ENCODE measurements at regions of chr6 and their contacts with region 1.

Region 1: GRCh38 chr6:27146706-27147505 is 100.6 kb upstream of the PRSS16 start:
- DNase-seq: peak; percentile 85
- ATAC-seq: peak; percentile 72
- H3K4me3 Mint-ChIP-seq: no peak overlapping the region
- H3K27ac Mint-ChIP-seq: no peak overlapping the region
- H3K4me1 Mint-ChIP-seq: peaks cover 13% of the 10 kb centered on the region
- H3K27me3 Mint-ChIP-seq: no peaks in the 10 kb centered on the region
- CTCF ChIP-seq: no peak

Region 2: DNA sequence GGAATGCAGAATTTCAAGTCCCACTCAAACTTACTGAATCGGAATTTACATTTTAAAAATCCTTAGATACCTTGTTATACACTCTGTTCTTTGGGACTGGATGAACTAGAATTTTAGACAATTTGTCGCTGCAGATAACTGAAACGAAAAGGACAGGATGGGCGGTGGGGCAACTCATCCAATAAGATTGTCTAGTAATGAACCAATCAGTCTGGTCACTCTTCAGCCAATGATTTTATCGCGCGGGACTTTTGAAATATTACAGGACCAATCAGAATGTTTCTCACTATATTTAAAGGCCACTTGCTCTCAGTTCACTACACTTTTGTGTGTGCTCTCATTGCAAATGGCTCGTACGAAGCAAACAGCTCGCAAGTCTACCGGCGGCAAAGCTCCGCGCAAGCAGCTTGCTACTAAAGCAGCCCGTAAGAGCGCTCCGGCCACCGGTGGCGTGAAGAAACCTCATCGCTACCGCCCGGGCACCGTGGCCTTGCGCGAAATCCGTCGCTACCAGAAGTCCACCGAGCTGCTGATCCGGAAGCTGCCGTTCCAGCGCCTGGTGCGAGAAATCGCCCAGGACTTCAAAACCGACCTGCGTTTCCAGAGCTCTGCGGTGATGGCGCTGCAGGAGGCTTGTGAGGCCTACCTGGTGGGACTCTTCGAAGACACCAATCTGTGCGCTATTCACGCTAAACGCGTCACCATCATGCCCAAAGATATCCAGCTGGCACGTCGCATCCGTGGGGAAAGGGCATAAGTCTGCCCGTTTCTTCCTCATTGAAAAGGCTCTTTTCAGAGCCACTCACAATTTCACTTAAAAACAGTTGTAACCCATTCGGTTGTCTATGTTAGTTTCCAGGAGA is 1101.6 kb before region 1 on chr6:
- CTCF ChIA-PET with region 1: no interaction called
- POLR2A ChIA-PET with region 1: interaction called, 10 read pairs
- intact Hi-C with region 1: no loop called
- DNase-seq: peak; percentile 85
- ATAC-seq: peak; percentile 63
- H3K4me3 Mint-ChIP-seq: peak overlapping the region; percentile 76
- H3K27ac Mint-ChIP-seq: peak overlapping the region; percentile 96
- H3K4me1 Mint-ChIP-seq: peaks cover 10% of the 10 kb centered on the region
- H3K27me3 Mint-ChIP-seq: no peaks in the 10 kb centered on the region
- CTCF ChIP-seq: no peak

Region 3: DNA sequence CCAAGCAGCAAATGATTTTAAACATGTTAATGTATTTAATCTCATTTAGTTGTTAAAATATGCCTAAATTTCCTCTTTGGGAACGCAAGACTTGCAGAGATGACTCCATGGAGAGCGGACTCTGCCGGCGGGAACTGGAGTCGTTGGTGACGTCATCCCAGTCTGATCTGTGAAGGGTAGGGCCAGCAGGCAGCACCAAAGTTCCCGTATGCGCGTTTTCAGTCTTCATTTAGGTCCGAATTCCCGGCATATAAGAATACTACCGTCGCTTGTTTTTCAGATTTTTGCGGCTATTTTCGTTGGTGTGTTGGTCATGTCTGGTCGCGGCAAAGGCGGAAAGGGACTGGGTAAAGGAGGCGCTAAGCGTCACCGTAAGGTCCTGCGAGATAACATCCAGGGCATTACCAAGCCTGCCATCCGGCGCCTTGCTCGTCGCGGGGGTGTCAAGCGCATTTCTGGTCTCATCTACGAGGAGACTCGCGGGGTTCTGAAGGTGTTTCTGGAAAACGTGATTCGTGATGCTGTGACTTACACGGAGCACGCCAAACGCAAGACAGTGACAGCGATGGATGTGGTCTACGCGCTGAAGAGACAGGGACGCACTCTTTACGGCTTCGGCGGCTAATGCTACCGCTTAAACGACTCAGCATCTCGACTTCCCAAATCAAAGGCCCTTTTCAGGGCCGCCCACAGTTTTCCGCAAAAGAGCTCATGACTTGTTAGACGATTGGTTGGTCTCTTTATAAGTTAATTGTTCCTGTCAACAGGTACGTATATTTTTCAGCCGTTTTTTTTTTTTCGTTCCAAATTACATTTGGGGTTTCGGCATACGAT is 942.4 kb before region 1 on chr6:
- CTCF ChIA-PET with region 1: no interaction called
- POLR2A ChIA-PET with region 1: interaction called, 34 read pairs
- intact Hi-C with region 1: no loop called
- DNase-seq: peak; percentile 91
- ATAC-seq: peak; percentile 75
- H3K4me3 Mint-ChIP-seq: no peak overlapping the region
- H3K27ac Mint-ChIP-seq: no peak overlapping the region
- H3K4me1 Mint-ChIP-seq: peaks cover 17% of the 10 kb centered on the region
- H3K27me3 Mint-ChIP-seq: no peaks in the 10 kb centered on the region
- CTCF ChIP-seq: no peak

Region 4: DNA sequence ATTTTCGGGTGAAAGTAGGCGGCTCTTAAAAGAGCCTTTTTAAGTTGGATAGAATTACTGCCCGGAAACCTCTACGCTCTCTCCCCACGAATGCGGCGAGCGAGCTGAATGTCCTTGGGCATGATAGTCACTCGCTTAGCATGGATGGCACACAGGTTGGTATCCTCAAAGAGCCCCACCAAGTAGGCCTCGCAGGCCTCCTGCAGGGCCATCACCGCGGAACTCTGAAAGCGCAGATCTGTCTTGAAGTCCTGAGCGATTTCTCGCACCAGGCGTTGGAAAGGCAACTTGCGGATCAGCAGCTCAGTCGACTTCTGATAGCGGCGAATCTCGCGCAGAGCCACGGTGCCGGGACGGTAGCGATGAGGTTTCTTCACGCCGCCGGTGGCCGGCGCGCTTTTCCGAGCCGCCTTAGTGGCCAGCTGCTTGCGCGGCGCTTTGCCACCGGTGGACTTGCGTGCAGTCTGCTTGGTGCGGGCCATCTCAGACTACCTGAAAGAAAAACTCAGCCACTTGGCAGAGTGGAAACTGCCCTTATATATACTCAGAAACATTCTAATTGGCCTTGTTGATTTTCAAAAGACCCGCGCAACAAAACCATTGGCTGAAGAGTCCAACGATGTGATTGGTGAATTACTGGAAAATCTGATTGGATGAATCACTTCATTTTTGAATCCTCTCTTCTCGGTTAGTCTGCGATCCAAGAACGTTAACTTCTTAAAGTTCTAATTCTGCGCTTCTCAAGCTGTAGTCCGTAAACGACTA is 875.8 kb before region 1 on chr6:
- CTCF ChIA-PET with region 1: no interaction called
- POLR2A ChIA-PET with region 1: interaction called, 33 read pairs
- intact Hi-C with region 1: no loop called
- DNase-seq: peak; percentile 87
- ATAC-seq: peak; percentile 43
- H3K4me3 Mint-ChIP-seq: no peak overlapping the region
- H3K27ac Mint-ChIP-seq: no peak overlapping the region
- H3K4me1 Mint-ChIP-seq: peaks cover 18% of the 10 kb centered on the region
- H3K27me3 Mint-ChIP-seq: no peaks in the 10 kb centered on the region
- CTCF ChIP-seq: no peak

Region 5: DNA sequence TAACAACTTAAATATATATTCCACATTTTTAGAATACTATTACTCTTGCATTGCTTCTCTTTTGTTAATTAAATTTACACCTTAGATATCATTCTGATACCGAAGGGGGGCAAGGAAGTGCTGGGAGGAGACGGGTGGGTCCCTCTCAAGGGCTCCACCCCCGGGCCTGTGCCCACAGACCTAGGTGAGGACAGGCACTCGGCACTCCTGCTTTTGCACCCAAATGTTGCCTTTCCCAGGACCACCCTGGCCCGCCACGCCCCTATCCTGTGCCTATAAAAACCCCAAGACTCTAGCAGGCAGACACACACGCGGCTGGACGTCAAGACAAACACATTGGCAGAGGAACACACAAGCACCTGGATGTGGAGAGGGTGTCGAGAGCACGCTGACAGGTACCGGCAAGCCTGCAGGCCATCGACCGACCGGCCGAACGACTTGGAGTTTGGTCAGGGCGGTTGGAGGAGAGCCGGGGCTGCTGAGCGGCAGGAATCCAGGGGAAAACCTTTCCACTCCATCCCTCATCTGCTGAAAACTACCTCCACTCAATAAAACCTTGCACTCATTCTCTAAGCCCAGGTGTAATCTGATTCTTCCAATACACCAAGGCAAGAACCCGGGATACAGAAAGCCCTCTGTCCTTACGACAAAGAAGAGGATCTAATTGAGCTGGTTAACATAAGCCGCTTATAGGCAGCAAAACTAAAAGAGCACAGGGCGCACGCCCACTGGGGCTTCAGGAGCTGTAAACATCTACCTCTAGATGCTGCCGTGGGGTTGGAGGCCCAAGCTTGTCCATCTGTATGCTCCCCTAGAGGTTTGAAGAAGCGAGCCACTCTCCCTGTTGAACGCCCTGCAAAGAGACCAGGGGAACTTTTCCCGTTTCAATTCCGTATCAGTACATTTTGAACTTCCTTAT is 96.8 kb before region 1 on chr6:
- CTCF ChIA-PET with region 1: no interaction called
- POLR2A ChIA-PET with region 1: no interaction called
- intact Hi-C with region 1: no loop called
- DNase-seq: no peak
- ATAC-seq: no peak
- H3K4me3 Mint-ChIP-seq: no peak overlapping the region
- H3K27ac Mint-ChIP-seq: no peak overlapping the region
- H3K4me1 Mint-ChIP-seq: no peaks in the 10 kb centered on the region
- H3K27me3 Mint-ChIP-seq: peaks cover 10% of the 10 kb centered on the region
- CTCF ChIP-seq: no peak

Region 6: DNA sequence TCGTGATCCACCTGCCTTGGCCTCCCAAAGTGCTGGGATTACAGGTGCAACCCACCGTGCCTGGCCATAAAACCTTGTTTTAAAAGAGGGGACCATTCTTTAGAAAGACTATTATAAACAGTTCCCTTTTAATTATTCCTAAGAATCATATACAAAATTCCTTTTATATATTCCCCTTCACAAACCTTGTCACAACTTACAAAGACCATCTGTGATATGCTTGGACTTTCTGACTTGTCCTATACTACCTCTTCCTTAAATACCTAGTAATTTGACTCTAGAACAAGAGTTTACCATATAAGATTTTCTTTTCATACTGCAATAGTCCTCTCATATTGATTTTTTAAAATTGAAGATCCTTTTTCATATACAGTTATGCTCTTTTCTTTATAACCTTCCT is 35.2 kb before region 1 on chr6:
- CTCF ChIA-PET with region 1: no interaction called
- POLR2A ChIA-PET with region 1: no interaction called
- intact Hi-C with region 1: no loop called
- DNase-seq: no peak
- ATAC-seq: no peak
- H3K4me3 Mint-ChIP-seq: no peak overlapping the region
- H3K27ac Mint-ChIP-seq: no peak overlapping the region
- H3K4me1 Mint-ChIP-seq: no peaks in the 10 kb centered on the region
- H3K27me3 Mint-ChIP-seq: peaks cover 21% of the 10 kb centered on the region
- CTCF ChIP-seq: no peak

Region 7: GRCh38 chr6:27157459-27158315 is 10.8 kb after region 1 on chr6:
- CTCF ChIA-PET with region 1: interaction called, 4 read pairs
- POLR2A ChIA-PET with region 1: interaction called, 85 read pairs
- intact Hi-C with region 1: no loop called
- DNase-seq: peak; percentile 92
- ATAC-seq: peak; percentile 80
- H3K4me3 Mint-ChIP-seq: peak overlapping the region; percentile 76
- H3K27ac Mint-ChIP-seq: peak overlapping the region; percentile 77
- H3K4me1 Mint-ChIP-seq: peaks cover 47% of the 10 kb centered on the region
- H3K27me3 Mint-ChIP-seq: no peaks in the 10 kb centered on the region
- CTCF ChIP-seq: peak; percentile 36

Region 8: DNA sequence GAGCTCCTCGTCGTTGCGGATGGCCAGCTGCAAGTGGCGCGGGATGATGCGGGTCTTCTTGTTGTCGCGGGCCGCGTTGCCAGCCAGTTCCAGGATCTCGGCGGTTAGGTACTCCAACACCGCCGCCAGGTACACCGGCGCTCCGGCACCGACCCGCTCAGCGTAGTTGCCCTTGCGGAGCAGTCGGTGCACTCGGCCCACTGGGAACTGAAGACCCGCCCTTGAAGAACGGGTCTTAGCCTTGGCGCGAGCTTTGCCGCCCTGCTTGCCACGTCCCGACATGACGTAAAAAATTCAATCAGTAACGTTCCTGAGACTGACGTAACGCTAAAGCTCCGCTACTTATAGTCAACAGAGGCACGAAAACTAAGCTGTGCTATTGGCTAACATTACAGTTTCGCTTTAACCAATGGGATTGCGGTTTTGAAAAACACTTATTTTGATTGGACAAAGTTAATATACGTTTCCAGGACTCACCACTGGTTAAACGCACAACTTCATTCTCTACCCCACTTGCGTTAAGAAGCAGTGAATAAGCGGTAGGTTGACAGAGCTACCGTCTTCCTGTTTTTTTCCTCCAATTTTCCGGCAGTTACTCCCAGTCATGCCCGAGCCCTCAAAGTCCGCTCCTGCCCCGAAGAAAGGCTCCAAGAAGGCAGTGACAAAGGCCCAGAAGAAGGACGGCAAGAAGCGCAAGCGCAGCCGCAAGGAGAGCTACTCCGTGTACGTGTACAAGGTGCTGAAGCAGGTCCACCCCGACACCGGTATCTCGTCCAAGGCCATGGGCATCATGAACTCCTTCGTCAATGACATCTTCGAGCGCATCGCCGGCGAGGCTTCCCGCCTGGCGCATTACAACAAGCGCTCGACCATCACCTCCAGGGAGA is 691.4 kb after region 1 on chr6:
- CTCF ChIA-PET with region 1: no interaction called
- POLR2A ChIA-PET with region 1: interaction called, 56 read pairs
- intact Hi-C with region 1: no loop called
- DNase-seq: peak; percentile 87
- ATAC-seq: peak; percentile 73
- H3K4me3 Mint-ChIP-seq: no peak overlapping the region
- H3K27ac Mint-ChIP-seq: no peak overlapping the region
- H3K4me1 Mint-ChIP-seq: peaks cover 20% of the 10 kb centered on the region
- H3K27me3 Mint-ChIP-seq: no peaks in the 10 kb centered on the region
- CTCF ChIP-seq: no peak